ENCODE measurements at regions of chr4 and their contacts with region 1.

Region 1: DNA sequence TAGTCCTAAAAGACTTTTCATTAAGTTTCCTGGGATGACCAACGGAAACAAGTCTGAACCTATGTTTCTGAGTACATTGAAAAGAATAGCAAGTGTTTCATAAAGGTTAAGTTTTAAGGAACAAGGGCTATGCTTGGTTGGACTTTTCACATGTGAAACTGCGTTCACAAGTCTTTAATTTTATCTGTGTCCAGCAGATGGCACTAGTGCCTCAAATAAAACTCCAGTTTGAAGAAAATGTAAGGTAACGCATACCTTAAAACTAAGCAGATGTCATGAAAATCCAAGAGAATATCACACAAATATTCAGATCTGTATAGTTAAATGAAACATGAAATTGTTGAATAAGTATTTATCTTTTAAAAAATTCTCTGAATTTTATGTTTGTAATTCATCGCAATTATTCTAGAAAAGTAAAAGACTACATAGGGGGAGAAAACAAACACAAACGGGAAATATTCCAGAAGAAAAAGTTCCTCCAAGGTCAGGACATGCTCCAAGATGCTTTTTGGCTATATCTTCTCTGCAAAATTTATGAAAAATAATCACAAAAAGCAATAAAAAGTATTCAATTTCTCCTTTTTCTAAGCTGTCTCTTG is 89.6 kb upstream of the MAD2L1 start:
- DNase-seq: no peak
- H3K4me3 ChIP-seq: no peak overlapping the region
- H3K27ac ChIP-seq: no peak overlapping the region
- H3K4me1 ChIP-seq: no peaks in the 10 kb centered on the region
- H3K27me3 ChIP-seq: no peaks in the 10 kb centered on the region
- CTCF ChIP-seq: peak; percentile 76

Region 2: DNA sequence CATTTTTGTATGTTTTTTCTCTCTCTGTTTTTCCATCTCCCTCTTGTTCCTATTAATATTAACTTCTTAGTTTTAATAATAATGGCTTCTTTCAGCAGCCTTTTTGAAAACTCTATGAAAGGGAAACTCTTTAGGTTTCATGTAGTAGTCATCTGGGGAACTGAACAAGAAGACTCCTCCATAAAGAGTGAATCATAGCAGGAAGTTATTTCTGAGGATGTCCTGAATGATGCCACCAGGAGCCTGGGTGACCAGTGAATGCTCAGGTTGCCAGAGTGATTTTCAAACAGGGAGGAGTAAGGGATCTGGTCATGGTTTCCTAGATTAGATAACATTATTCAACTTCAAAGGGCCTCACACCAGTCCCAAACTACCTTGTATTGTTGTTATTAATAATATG is 314.9 kb before region 1 on chr4:
- intact Hi-C with region 1: no loop called
- DNase-seq: no peak
- H3K4me3 ChIP-seq: no peak overlapping the region
- H3K27ac ChIP-seq: no peak overlapping the region
- H3K4me1 ChIP-seq: no peaks in the 10 kb centered on the region
- H3K27me3 ChIP-seq: no peaks in the 10 kb centered on the region
- CTCF ChIP-seq: no peak

Region 3: DNA sequence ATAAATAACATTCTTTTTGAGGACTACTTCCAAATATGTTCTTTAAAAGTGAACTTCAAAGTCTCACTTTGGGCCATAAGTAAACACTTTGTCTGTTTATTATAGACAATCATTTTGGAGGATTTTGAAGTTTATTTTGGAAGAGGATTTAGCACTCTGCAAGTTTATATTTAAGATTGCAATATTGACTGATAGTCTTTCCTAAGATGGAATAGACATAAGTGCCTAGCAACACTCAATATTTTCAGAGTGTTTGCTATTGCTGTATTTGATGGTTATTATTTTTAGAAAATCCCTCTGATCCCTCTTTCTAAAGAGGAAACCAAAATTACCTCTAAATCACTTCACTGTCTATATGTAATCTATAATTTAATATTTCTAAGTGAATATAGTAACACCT is 46.8 kb before region 1 on chr4:
- intact Hi-C with region 1: no loop called
- DNase-seq: no peak
- H3K4me3 ChIP-seq: no peak overlapping the region
- H3K27ac ChIP-seq: no peak overlapping the region
- H3K4me1 ChIP-seq: no peaks in the 10 kb centered on the region
- H3K27me3 ChIP-seq: no peaks in the 10 kb centered on the region
- CTCF ChIP-seq: no peak

Region 4: GRCh38 chr4:120228086-120228485 is 71.9 kb after region 1 on chr4:
- intact Hi-C with region 1: no loop called
- DNase-seq: no peak
- H3K4me3 ChIP-seq: no peak overlapping the region
- H3K27ac ChIP-seq: no peak overlapping the region
- H3K4me1 ChIP-seq: peaks cover 3% of the 10 kb centered on the region
- H3K27me3 ChIP-seq: no peaks in the 10 kb centered on the region
- CTCF ChIP-seq: no peak

Region 5: DNA sequence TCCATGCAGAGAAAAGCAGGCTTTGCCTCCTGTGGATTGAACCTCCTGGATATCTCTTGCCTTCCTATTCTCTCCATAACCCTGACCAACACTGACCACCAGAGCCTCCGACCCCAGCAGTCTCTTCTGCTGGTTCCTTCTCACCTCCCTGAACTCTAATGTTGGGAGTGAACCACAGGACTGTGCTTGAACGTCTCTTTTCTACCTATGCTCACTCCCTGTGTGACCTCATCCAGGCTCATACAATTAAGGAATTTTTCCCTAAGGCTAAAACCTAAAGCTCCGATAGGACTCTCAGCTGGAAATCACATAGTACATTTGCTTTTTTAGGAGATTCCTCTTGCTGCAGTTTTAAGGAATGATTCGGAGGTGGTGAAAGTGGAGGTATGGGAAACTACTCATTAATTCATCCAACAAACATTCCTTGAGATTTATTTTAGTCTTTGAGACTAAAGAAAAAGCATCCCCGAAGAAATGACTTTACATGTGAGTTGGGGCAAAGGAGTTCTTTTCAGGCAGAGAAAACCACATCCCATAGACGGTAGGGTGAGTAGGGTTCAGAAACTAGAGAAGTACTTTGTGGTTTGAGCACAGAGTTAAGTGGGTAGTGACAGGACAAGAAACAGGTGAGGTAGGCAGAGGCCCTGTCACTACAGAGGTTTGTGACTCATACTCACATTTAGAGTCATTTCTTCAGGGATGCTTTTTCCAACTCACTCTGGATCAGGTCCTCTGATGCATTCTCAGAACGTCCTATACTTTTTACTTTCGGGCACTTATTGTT is 885.3 kb after region 1 on chr4:
- intact Hi-C with region 1: no loop called
- DNase-seq: no peak
- H3K4me3 ChIP-seq: no peak overlapping the region
- H3K27ac ChIP-seq: no peak overlapping the region
- H3K4me1 ChIP-seq: no peaks in the 10 kb centered on the region
- H3K27me3 ChIP-seq: no peaks in the 10 kb centered on the region
- CTCF ChIP-seq: no peak

Region 6: DNA sequence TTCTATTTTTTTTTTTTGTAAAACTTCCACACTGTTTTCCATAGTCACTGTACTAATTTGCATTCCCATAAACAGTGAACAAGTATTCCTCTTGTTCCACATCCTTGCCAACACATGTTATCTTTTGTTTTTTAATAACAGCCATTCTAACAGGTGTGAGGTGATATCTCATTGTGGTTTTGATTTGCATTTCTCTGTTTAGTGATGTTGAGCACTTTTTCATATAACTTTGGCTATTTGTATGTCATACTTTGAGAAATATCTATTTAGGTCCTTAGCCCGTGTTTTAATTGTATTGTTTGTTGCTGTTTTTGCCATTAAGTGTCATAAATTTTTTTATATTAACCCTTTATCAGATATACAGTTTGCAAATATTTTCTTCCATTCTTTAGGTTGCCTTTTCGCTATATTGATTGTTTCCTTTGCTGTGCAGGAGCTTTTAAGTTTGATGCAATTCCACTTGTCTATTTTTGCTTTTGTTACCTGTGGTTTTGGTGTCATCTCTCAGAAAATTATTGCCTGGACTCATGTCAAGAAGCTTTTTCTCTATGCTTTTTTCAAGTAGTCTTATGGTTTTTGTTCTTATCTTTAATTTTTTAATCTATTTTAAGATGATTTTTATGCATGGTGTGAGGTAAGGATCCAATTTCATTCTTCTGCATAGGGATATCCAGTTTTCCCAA is 944.0 kb after region 1 on chr4:
- intact Hi-C with region 1: loop called (anchors 5 kb)
- DNase-seq: no peak
- H3K4me3 ChIP-seq: no peak overlapping the region
- H3K27ac ChIP-seq: no peak overlapping the region
- H3K4me1 ChIP-seq: no peaks in the 10 kb centered on the region
- H3K27me3 ChIP-seq: no peaks in the 10 kb centered on the region
- CTCF ChIP-seq: no peak

Region 7: GRCh38 chr4:121252224-121252806 is 1096.1 kb after region 1 on chr4:
- intact Hi-C with region 1: loop called (anchors 5 kb)
- DNase-seq: peak; percentile 32
- H3K4me3 ChIP-seq: no peak overlapping the region
- H3K27ac ChIP-seq: no peak overlapping the region
- H3K4me1 ChIP-seq: no peaks in the 10 kb centered on the region
- H3K27me3 ChIP-seq: no peaks in the 10 kb centered on the region
- CTCF ChIP-seq: peak; percentile 90

Measured in left ventricle myocardium inferior (tissue), 1 donor.